RWPE1 (cell line): ENCODE measurements at regions of chr1 and their contacts with region 1.

Region 1: GRCh38 chr1:225881969-225882693 is at the start of gene TMEM63A:
- DNase-seq: peak; percentile 97
- H3K27ac ChIP-seq: peak within 1 kb of the TSS; percentile 88
- CTCF ChIP-seq: peak; percentile 50

Region 2: GRCh38 chr1:225923692-225924555 is 41.8 kb after region 1 on chr1 and contains the start of gene PYCR2:
- CTCF ChIA-PET with region 1: interaction called, 11 read pairs
- POLR2A ChIA-PET with region 1: interaction called, 22 read pairs
- DNase-seq: peak; percentile 99
- H3K27ac ChIP-seq: peak within 1 kb of the TSS; percentile 97
- CTCF ChIP-seq: no peak

Region 3: GRCh38 chr1:225977937-225978748 is 96.0 kb after region 1 on chr1:
- CTCF ChIA-PET with region 1: interaction called, 10 read pairs
- POLR2A ChIA-PET with region 1: no interaction called
- DNase-seq: no peak
- H3K27ac ChIP-seq: peak overlapping the region; percentile 50
- CTCF ChIP-seq: no peak